BJ (cell line): ENCODE measurements at regions of chr11 and their contacts with region 1.

Region 1: GRCh38 chr11:85854557-85855340 is 434 bp upstream of the CCDC83 start:
- DNase-seq: peak; percentile 40
- H3K4me3 ChIP-seq: peak overlapping the region; percentile 63
- H3K27me3 ChIP-seq: no peaks in the 10 kb centered on the region
- CTCF ChIP-seq: peak; percentile 74

Region 2: GRCh38 chr11:85718991-85719807 is 135.6 kb before region 1 on chr11:
- CTCF ChIA-PET with region 1: interaction called, 11 read pairs
- POLR2A ChIA-PET with region 1: no interaction called
- DNase-seq: peak; percentile 99
- H3K4me3 ChIP-seq: peak overlapping the region; percentile 48
- H3K27me3 ChIP-seq: no peaks in the 10 kb centered on the region
- CTCF ChIP-seq: no peak

Region 3: DNA sequence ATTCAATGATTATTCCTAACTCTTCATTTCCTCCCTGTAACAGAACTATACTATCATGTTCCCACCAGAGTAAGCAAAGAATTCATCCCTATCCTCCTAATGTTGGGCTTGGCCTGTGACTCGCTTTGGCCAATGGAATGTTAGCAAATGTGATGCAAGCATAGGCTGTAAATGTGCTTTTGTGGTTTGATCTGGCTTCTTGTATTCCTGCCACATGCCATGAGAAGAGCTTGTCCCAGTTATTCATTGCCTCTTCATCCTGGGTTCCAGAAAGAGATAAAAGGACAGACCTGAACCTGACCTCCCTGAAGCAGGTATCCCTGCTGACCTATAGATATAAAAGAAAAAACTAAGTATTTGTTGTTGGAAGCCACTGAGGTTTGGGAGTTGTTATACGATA is 94.8 kb before region 1 on chr11:
- CTCF ChIA-PET with region 1: no interaction called
- POLR2A ChIA-PET with region 1: no interaction called
- DNase-seq: peak; percentile 78
- H3K4me3 ChIP-seq: no peak overlapping the region
- H3K27me3 ChIP-seq: no peaks in the 10 kb centered on the region
- CTCF ChIP-seq: no peak

Region 4: GRCh38 chr11:85844426-85845129 is 10.2 kb before region 1 on chr11:
- CTCF ChIA-PET with region 1: interaction called, 17 read pairs
- POLR2A ChIA-PET with region 1: no interaction called
- DNase-seq: peak; percentile 14
- H3K4me3 ChIP-seq: no peak overlapping the region
- H3K27me3 ChIP-seq: no peaks in the 10 kb centered on the region
- CTCF ChIP-seq: no peak

Region 5: GRCh38 chr11:85867751-85868150 is 13.0 kb after region 1 on chr11:
- CTCF ChIA-PET with region 1: interaction called, 14 read pairs
- POLR2A ChIA-PET with region 1: no interaction called
- DNase-seq: no peak
- H3K4me3 ChIP-seq: no peak overlapping the region
- H3K27me3 ChIP-seq: no peaks in the 10 kb centered on the region
- CTCF ChIP-seq: no peak

Region 6: DNA sequence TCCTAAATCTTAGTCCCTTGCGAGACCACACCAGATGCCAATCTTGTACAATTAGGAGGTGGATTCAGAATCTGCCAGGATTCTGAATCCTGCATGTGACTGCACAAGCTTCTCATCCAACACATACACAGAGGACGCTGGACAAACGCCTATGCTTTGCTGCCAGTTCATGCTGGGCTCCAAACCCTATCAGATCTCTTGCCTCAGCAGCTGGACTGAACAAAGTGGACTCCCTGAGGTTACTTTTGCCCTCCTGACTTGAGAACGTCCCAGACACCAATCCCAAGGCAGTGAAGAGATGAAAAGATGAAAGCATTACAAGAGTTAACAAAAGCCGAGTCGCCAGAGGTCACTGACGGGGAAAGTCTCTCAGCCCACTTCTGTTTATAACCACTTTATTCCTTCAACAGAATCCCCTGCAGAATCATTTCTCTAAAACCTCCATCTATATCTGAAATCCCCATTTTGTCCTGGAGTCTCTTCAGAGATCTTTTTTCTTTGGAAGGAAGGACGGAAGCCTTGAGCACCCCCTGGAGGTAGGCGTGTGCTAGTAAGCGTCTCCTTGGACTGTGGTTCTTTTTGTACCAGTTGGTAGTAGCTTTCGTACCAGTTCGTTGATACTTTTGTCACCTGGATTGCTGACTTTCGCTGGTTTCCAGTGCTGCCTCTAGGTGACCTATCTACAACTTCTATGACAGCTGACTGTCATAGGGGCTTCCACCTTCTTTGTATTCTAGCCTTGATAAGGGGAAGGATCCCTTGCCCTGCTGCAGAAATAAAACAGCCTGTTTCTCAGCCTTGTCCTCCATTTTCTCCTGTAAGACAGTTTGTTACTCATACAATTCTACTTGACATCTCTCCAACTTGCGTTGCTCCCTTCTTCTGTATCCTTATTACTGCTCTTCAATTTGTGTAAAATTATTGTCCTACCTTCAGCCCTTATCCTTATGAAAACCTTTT is 363.7 kb after region 1 on chr11:
- CTCF ChIA-PET with region 1: interaction called, 12 read pairs
- POLR2A ChIA-PET with region 1: no interaction called
- DNase-seq: no peak
- H3K4me3 ChIP-seq: no peak overlapping the region
- H3K27me3 ChIP-seq: no peaks in the 10 kb centered on the region
- CTCF ChIP-seq: peak; percentile 96

Region 7: DNA sequence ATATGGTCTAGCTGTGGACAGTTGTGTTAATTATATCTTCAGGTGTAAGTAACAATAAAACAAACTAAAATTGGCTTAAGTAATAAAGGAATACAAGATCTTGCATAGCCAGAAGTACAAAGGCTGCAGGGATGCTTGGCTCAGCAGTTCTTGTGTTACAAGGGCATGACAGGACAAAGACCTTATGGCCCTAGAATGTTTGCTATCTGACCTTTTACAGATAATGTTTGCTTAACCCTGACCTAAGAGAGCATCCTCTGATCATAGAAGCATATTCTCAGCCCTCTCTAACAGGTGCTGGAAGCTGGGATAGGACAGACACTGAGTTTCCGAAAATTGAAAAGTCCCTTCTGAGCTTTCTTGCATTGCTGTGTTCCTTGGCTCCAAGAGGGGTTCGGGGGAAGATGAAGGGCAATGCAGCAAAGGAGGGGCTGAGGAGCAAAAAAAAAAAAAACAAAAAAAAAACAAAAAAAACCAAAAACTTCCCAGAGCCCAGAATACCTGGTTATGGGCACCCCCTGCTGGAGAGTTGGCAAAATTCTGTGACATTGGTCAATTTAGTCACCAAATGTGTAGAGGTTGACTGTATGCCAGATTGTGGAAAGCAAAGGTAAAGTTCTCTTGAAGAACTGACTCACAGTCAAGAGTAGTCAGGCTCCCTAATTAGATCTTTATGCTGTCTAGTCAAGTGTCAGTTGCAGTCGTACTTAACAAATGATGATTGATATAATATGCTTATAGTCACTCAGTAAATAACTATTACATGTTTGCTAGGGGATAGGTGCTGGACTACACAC is 436.9 kb after region 1 on chr11:
- CTCF ChIA-PET with region 1: interaction called, 19 read pairs
- POLR2A ChIA-PET with region 1: interaction called, 3 read pairs
- DNase-seq: no peak
- H3K4me3 ChIP-seq: no peak overlapping the region
- H3K27me3 ChIP-seq: no peaks in the 10 kb centered on the region
- CTCF ChIP-seq: peak; percentile 67